ENCODE measurements at regions of chr6 and their contacts with region 1.

Region 1: GRCh38 chr6:3732345-3733141 is 19.0 kb downstream of the PXDC1 start:
- DNase-seq: peak; percentile 75 to 94 (median 86)

Region 2: DNA sequence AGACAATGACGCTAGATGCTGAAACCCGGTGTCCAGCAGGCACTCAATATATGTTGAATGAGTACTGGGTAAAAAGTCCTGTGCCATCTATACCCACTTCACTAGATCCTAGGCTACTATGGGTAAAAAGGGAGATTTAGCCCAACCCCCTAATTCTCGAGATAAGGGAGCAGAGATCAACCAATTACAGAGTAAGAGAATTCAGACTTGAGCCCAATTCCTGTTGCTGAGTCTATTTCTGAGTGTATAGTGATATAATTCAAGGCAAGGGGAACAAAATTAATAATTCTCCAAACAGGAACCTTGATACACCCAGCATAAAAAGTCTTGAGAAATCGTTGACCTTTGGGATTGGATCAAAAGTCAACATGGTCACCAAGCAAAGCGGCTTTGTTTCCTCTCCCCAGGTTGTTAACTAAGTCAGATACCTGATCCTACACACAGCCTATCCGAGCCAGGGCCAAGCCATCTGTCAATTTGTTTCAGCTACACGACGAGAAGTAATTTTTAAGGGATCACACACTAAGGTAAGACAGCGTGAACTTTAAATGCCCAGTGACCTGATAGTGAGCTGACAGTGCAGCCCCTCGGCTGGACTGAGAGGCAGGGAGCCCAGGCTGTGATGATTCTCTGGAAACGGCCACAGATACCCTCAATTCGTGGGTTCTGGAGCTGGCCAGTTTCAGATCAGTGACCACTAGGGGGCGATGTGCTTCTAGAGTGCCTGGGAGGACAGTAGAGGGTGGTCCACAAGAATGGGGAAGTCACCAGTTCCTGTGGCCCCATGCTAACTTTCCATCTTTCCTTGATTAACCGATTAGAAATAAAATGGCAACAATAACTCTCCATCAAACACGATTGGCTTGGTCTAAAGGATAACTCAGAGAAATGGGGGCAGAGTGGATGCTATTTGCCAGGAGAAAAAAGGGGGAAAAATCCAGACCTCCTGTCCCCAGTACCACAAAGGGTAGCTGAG is 321.9 kb before region 1 on chr6:
- intact Hi-C with region 1: loop called (anchors 10 kb)
- DNase-seq: peak in 41 of 42 donors; percentile 39 to 94 (median 77)

Region 3: GRCh38 chr6:3466488-3467219 is 265.9 kb before region 1 on chr6:
- intact Hi-C with region 1: loop called (anchors 10 kb)
- DNase-seq: no peak

Region 4: DNA sequence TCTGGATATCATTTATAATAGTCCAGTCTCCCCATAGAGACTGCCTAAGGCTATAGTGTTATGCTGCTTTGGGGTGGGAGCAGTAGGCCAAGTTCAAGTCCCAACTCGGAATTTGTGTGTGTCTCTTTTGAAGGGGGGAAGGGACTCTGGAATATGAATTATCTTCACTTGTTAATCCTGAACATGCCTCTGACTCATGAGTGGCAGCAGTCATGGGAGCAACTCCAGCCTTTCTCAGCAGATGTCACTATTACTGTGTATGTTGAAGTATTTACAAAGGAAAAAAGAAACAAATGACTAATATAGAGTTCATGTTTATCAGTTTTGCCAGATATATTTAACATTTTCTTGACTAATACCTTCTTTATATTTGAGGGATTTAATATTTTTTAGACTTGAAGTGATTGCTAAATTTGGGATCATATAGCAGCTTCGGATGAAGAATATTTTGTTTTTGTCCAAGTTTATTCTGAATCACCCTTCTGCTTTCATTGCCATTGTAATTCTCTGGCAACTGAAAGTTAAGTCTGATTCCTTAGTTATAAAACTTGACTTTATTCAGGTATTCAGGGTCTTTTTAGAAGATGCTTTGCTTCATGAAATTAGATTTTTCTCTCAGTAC is 323.0 kb after region 1 on chr6:
- intact Hi-C with region 1: no loop called
- DNase-seq: peak in 29 of 42 donors; percentile 7 to 75 (median 49)

Measured in head of caudate nucleus (tissue), 42 donors.